ENCODE measurements at regions of chr16 and their contacts with region 1.

Region 1: GRCh38 chr16:77584205-77584859 is 138.0 kb upstream of the NUDT7 start:
- DNase-seq: peak; percentile 50
- H3K4me3 Mint-ChIP-seq: no peak overlapping the region
- H3K27ac Mint-ChIP-seq: no peak overlapping the region
- H3K4me1 Mint-ChIP-seq: peaks cover 10% of the 10 kb centered on the region
- H3K27me3 Mint-ChIP-seq: peaks cover 21% of the 10 kb centered on the region

Region 2: GRCh38 chr16:77223184-77223583 is 361.1 kb before region 1 on chr16:
- CTCF ChIA-PET with region 1: interaction called, 10 read pairs
- POLR2A ChIA-PET with region 1: no interaction called
- intact Hi-C with region 1: no loop called
- DNase-seq: peak; percentile 49
- H3K4me3 Mint-ChIP-seq: no peak overlapping the region
- H3K27ac Mint-ChIP-seq: no peak overlapping the region
- H3K4me1 Mint-ChIP-seq: peaks cover 8% of the 10 kb centered on the region
- H3K27me3 Mint-ChIP-seq: no peaks in the 10 kb centered on the region

Region 3: DNA sequence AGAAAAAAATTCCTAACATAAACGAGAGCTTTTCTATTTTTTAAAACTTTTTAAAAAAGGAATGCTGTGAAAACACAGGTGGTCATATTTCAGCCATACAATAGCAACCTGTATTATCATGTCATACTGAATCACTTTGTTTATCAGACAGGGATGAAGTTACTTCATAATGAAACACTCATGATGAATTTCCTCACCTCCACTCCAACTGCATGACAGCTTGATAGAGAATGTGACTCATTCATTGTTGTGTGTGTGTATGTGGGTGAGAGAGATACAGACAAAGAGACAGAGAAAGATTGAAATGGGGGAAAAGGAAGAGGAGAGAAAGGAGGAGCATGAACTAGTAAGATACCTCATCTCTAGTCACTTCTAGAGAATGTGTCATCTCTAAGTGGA is 276.2 kb before region 1 on chr16:
- CTCF ChIA-PET with region 1: interaction called, 3 read pairs
- POLR2A ChIA-PET with region 1: no interaction called
- intact Hi-C with region 1: loop called (anchors 5 kb)
- DNase-seq: no peak
- H3K4me3 Mint-ChIP-seq: no peak overlapping the region
- H3K27ac Mint-ChIP-seq: peak overlapping the region; percentile 72
- H3K4me1 Mint-ChIP-seq: peaks cover 18% of the 10 kb centered on the region
- H3K27me3 Mint-ChIP-seq: peaks cover 14% of the 10 kb centered on the region

Region 4: GRCh38 chr16:77376358-77376757 is 208.0 kb before region 1 on chr16:
- CTCF ChIA-PET with region 1: interaction called, 7 read pairs
- POLR2A ChIA-PET with region 1: no interaction called
- intact Hi-C with region 1: loop called (anchors 1 kb)
- DNase-seq: no peak
- H3K4me3 Mint-ChIP-seq: no peak overlapping the region
- H3K27ac Mint-ChIP-seq: no peak overlapping the region
- H3K4me1 Mint-ChIP-seq: no peaks in the 10 kb centered on the region
- H3K27me3 Mint-ChIP-seq: no peaks in the 10 kb centered on the region

Region 5: GRCh38 chr16:77599793-77600415 is 15.6 kb after region 1 on chr16:
- CTCF ChIA-PET with region 1: interaction called, 25 read pairs
- POLR2A ChIA-PET with region 1: no interaction called
- intact Hi-C with region 1: no loop called
- DNase-seq: peak; percentile 25
- H3K4me3 Mint-ChIP-seq: no peak overlapping the region
- H3K27ac Mint-ChIP-seq: no peak overlapping the region
- H3K4me1 Mint-ChIP-seq: no peaks in the 10 kb centered on the region
- H3K27me3 Mint-ChIP-seq: peaks cover 15% of the 10 kb centered on the region

Region 6: DNA sequence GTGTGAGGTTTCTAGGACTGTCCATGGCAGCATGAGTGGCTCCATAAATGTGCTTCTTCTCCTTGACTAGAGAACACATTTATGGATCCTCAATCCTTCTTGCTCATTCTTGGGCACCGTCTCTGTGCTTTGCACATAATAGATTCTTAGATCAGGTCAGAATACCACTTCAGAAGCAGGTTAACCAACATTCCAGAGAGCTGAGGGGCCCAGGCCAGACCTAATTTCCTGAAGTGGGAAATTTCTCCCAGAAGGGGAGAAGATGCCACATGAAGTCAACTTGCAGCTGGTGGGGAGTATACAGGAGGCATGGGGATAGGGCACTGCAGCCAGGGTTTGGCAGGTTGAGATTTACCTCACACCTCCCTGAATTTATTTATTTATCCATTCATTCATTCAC is 179.7 kb after region 1 on chr16:
- CTCF ChIA-PET with region 1: no interaction called
- POLR2A ChIA-PET with region 1: no interaction called
- intact Hi-C with region 1: no loop called
- DNase-seq: no peak
- H3K4me3 Mint-ChIP-seq: no peak overlapping the region
- H3K27ac Mint-ChIP-seq: no peak overlapping the region
- H3K4me1 Mint-ChIP-seq: no peaks in the 10 kb centered on the region
- H3K27me3 Mint-ChIP-seq: peaks cover 4% of the 10 kb centered on the region